Naive thymus-derived CD4-positive, alpha-beta T cell (primary cell): ENCODE measurements at regions of chr2 and their contacts with region 1.

Region 1: GRCh38 chr2:234368861-234369261 is 128.0 kb downstream of the ARL4C start:
- DNase-seq: peak in 7 of 9 donors; percentile 13 to 43 (median 28)
- ATAC-seq: peak; percentile 78
- H3K4me3 ChIP-seq: no peak overlapping the region
- H3K4me3 Mint-ChIP-seq: peak overlapping the region; percentile 6 to 80 (median 46)
- H3K27ac ChIP-seq: peak overlapping the region; percentile 48
- H3K27ac Mint-ChIP-seq: peak overlapping the region; percentile 81 to 98 (median 90)
- H3K4me1 ChIP-seq: peaks cover 31 to 71% of the 10 kb centered on the region in 2 donors
- H3K4me1 Mint-ChIP-seq: peaks cover 47 to 86% (median 80%) of the 10 kb centered on the region in 7 donors
- H3K27me3 ChIP-seq: no peaks in the 10 kb centered on the region
- H3K27me3 Mint-ChIP-seq: no peaks in the 10 kb centered on the region

Region 2: GRCh38 chr2:233210843-233211547 is 1157.9 kb before region 1 on chr2:
- CTCF ChIA-PET with region 1: no interaction called
- POLR2A ChIA-PET with region 1: no interaction called
- intact Hi-C with region 1: no loop called
- DNase-seq: no peak
- ATAC-seq: no peak
- H3K4me3 ChIP-seq: no peak overlapping the region
- H3K4me3 Mint-ChIP-seq: no peak overlapping the region
- H3K27ac ChIP-seq: no peak overlapping the region
- H3K27ac Mint-ChIP-seq: peak overlapping the region in 7 of 9 donors; percentile 9 to 81 (median 67)
- H3K4me1 ChIP-seq: no peaks in the 10 kb centered on the region
- H3K4me1 Mint-ChIP-seq: peaks cover 5 to 22% (median 10%) of the 10 kb centered on the region in 7 donors
- H3K27me3 ChIP-seq: no peaks in the 10 kb centered on the region
- H3K27me3 Mint-ChIP-seq: no peaks in the 10 kb centered on the region

Region 3: GRCh38 chr2:234038076-234038802 is 330.6 kb before region 1 on chr2:
- CTCF ChIA-PET with region 1: no interaction called
- POLR2A ChIA-PET with region 1: no interaction called
- intact Hi-C with region 1: no loop called
- DNase-seq: no peak
- ATAC-seq: no peak
- H3K4me3 ChIP-seq: no peak overlapping the region
- H3K4me3 Mint-ChIP-seq: no peak overlapping the region
- H3K27ac ChIP-seq: no peak overlapping the region
- H3K27ac Mint-ChIP-seq: no peak overlapping the region
- H3K4me1 ChIP-seq: peaks cover under 1 to 3% of the 10 kb centered on the region in 2 donors
- H3K4me1 Mint-ChIP-seq: peaks cover 0 to 4% (median 0%) of the 10 kb centered on the region in 7 donors
- H3K27me3 ChIP-seq: no peaks in the 10 kb centered on the region
- H3K27me3 Mint-ChIP-seq: peaks cover 0 to 62% (median 0%) of the 10 kb centered on the region in 5 donors

Region 4: DNA sequence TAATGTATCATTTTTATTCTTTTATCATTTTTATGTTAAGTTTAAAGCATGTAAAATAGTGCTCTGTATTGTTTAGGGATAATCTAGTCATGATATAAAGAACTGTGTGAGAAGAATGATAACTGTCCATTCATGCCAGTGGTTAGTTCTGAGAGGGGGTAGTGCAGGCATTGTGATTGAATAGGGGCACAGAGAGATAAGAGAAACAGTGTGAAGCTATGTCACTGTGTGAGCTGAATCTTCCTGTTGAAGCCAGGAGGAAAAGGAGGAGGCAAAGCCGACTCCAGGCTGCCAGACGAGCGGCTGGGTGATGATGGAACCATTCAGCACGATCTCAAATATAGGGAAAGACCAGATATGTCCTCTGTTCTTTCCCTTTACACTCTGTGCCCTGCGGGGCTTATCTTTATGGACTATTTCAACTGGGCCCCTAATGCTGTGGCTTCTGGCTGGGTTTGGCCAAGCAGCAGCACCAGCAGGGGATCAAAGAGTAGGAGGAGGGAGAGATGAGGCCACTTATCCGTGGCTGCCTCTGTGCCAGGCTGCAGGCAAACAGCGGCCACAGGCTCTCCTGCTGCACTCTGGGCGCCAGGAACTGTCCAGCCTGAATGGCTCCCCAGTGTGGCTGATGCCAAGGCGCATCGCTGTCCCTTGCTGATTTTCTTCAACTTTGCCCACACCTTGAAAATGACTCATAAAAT is 190.4 kb before region 1 on chr2:
- CTCF ChIA-PET with region 1: no interaction called
- POLR2A ChIA-PET with region 1: no interaction called
- intact Hi-C with region 1: no loop called
- DNase-seq: no peak
- ATAC-seq: no peak
- H3K4me3 ChIP-seq: no peak overlapping the region
- H3K4me3 Mint-ChIP-seq: no peak overlapping the region
- H3K27ac ChIP-seq: no peak overlapping the region
- H3K27ac Mint-ChIP-seq: peak overlapping the region in 1 of 9 donors; percentile 12
- H3K4me1 ChIP-seq: no peaks in the 10 kb centered on the region
- H3K4me1 Mint-ChIP-seq: peaks cover 0 to 5% (median 0%) of the 10 kb centered on the region in 7 donors
- H3K27me3 ChIP-seq: no peaks in the 10 kb centered on the region
- H3K27me3 Mint-ChIP-seq: peaks cover 0 to 48% (median 0%) of the 10 kb centered on the region in 5 donors

Region 5: DNA sequence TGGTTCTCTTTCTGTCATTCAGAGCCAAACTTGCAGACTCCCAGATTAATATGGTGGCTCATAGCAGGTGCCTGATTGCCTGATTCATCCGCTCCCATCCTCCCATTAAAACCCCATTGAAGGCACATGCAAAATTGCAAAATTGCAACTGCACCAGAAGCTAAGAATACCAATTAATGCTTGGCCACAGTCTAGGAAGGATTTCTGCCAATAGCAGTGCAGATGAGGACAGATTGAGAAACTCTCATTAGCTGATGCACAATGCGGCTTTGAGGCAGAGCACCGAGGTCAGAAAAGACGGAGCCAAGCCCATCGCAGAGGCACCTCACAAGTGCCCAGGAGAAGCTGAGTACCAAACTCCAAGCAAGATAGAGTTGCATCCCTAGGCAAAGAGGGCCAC is 44.7 kb before region 1 on chr2:
- CTCF ChIA-PET with region 1: no interaction called
- POLR2A ChIA-PET with region 1: interaction called, 3 read pairs
- intact Hi-C with region 1: loop called in 1 of 2 experiments (anchors 5 kb)
- DNase-seq: no peak
- ATAC-seq: no peak
- H3K4me3 ChIP-seq: no peak overlapping the region
- H3K4me3 Mint-ChIP-seq: peak overlapping the region in 4 of 10 donors; percentile 5 to 52 (median 28)
- H3K27ac ChIP-seq: no peak overlapping the region
- H3K27ac Mint-ChIP-seq: peak overlapping the region; percentile 81 to 98 (median 89)
- H3K4me1 ChIP-seq: peaks cover 15 to 23% of the 10 kb centered on the region in 2 donors
- H3K4me1 Mint-ChIP-seq: peaks cover 21 to 76% (median 56%) of the 10 kb centered on the region in 7 donors
- H3K27me3 ChIP-seq: no peaks in the 10 kb centered on the region
- H3K27me3 Mint-ChIP-seq: no peaks in the 10 kb centered on the region

Region 6: DNA sequence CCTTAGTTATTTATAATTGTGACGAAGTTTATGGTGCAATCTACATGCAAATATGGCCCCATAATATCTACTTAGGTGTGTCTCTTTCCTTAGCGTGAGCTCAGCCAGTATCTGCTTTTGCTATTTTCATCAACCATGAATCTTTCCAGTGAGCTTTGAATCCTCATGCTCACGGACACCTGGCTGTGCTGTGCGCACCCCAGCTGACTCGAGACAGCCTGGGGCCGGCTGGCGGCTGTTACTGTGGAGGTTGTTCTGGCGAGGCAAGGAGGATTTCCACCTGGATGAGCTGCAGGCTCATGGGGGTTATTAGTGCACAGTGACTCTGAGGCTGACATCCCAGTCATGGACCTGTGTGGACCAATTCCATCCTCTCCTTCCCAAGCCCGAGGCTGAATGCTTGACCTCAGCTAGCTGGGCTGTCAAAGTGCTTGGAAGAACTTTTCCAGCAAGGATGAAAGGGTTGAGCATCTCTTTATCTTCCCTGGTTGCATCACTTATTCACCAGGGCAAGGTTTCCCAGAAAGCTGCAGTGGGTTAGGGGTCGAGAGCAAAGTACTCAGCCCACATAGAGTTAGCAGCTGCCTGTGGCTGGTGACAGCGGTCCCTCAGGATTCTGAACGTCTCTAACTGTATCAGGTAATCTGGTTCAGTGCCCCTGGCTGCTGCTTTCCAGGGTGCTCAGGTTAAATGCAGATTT is 13.7 kb before region 1 on chr2:
- CTCF ChIA-PET with region 1: interaction called, 4 read pairs
- POLR2A ChIA-PET with region 1: interaction called, 10 read pairs
- intact Hi-C with region 1: loop called in 1 of 2 experiments (anchors 1 kb)
- DNase-seq: no peak
- ATAC-seq: no peak
- H3K4me3 ChIP-seq: no peak overlapping the region
- H3K4me3 Mint-ChIP-seq: peak overlapping the region in 1 of 10 donors; percentile 48
- H3K27ac ChIP-seq: no peak overlapping the region
- H3K27ac Mint-ChIP-seq: peak overlapping the region in 7 of 9 donors; percentile 19 to 85 (median 68)
- H3K4me1 ChIP-seq: peaks cover 6 to 13% of the 10 kb centered on the region in 2 donors
- H3K4me1 Mint-ChIP-seq: peaks cover 9 to 36% (median 31%) of the 10 kb centered on the region in 7 donors
- H3K27me3 ChIP-seq: no peaks in the 10 kb centered on the region
- H3K27me3 Mint-ChIP-seq: no peaks in the 10 kb centered on the region

Region 7: DNA sequence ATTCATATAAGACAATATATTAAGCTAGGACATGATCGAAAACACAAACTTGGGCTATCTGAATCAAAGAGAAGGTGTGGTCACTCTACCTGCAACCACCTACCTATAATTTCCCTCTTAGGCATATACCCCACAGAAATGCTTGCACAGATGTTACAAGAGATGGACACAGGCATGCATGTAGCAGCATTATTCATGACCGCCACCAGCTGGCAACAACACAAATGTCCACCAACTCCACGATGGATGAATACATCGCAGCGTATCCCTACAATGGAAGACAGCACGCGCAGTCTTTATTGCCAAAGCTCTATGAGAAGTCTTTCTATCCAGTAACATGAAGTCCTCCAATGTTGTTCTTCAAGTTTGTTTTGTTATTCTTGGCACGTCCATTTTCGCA is 37.2 kb after region 1 on chr2:
- CTCF ChIA-PET with region 1: no interaction called
- POLR2A ChIA-PET with region 1: no interaction called
- intact Hi-C with region 1: loop called in 1 of 2 experiments (anchors 5 kb)
- DNase-seq: no peak
- ATAC-seq: no peak
- H3K4me3 ChIP-seq: no peak overlapping the region
- H3K4me3 Mint-ChIP-seq: no peak overlapping the region
- H3K27ac ChIP-seq: no peak overlapping the region
- H3K27ac Mint-ChIP-seq: peak overlapping the region in 1 of 9 donors; percentile 55
- H3K4me1 ChIP-seq: peaks cover 6 to 7% of the 10 kb centered on the region in 2 donors
- H3K4me1 Mint-ChIP-seq: peaks cover 16 to 63% (median 57%) of the 10 kb centered on the region in 7 donors
- H3K27me3 ChIP-seq: no peaks in the 10 kb centered on the region
- H3K27me3 Mint-ChIP-seq: no peaks in the 10 kb centered on the region

Region 8: DNA sequence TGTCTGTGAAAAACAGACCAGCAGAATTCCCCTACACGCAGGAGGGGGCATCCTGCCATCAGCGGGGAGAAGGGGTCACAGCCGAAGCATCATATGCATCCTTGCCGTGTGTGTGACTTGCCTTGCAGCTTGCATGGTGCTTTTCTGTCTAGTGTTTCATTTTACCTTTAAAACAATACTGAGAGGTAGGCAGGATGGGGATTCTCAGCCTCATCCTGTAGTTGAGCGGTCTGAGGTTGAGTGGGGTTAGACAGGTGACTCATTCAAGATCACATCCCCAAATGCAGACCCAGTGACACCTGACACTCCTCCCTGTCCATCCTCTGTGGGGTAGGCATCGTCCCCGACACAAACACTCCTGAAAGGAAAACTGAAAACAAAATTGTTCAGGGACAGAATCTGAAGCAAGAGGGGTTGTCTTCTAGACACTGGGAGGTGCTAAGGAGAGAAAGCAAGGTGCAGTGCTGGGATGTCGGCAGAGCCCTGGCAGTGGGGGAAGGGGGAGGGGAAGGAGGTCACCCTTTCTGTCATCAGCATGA is 120.1 kb after region 1 on chr2:
- CTCF ChIA-PET with region 1: interaction called, 6 read pairs
- POLR2A ChIA-PET with region 1: interaction called, 8 read pairs
- intact Hi-C with region 1: loop called (anchors 2 kb)
- DNase-seq: peak in 8 of 9 donors; percentile 64 to 89 (median 82)
- ATAC-seq: peak; percentile 80
- H3K4me3 ChIP-seq: peak overlapping the region; percentile 48
- H3K4me3 Mint-ChIP-seq: peak overlapping the region; percentile 85 to 100 (median 96)
- H3K27ac ChIP-seq: peak overlapping the region; percentile 94
- H3K27ac Mint-ChIP-seq: peak overlapping the region; percentile 91 to 100 (median 98)
- H3K4me1 ChIP-seq: peaks cover 68 to 83% of the 10 kb centered on the region in 2 donors
- H3K4me1 Mint-ChIP-seq: peaks cover 39 to 84% (median 79%) of the 10 kb centered on the region in 7 donors
- H3K27me3 ChIP-seq: no peaks in the 10 kb centered on the region
- H3K27me3 Mint-ChIP-seq: peaks cover 0 to 2% (median 0%) of the 10 kb centered on the region in 5 donors

Region 9: GRCh38 chr2:235314371-235314930 is 945.6 kb after region 1 on chr2:
- CTCF ChIA-PET with region 1: no interaction called
- POLR2A ChIA-PET with region 1: no interaction called
- intact Hi-C with region 1: no loop called
- DNase-seq: no peak
- ATAC-seq: no peak
- H3K4me3 ChIP-seq: no peak overlapping the region
- H3K4me3 Mint-ChIP-seq: no peak overlapping the region
- H3K27ac ChIP-seq: no peak overlapping the region
- H3K27ac Mint-ChIP-seq: no peak overlapping the region
- H3K4me1 ChIP-seq: no peaks in the 10 kb centered on the region
- H3K4me1 Mint-ChIP-seq: no peaks in the 10 kb centered on the region
- H3K27me3 ChIP-seq: no peaks in the 10 kb centered on the region
- H3K27me3 Mint-ChIP-seq: peaks cover 0 to 28% (median 21%) of the 10 kb centered on the region in 5 donors